Activated CD4-positive, alpha-beta T cell treated with anti-CD3 and anti-CD28 coated beads for 36 hours (primary cell): ENCODE measurements at regions of chr2 and their contacts with region 1.

Region 1: DNA sequence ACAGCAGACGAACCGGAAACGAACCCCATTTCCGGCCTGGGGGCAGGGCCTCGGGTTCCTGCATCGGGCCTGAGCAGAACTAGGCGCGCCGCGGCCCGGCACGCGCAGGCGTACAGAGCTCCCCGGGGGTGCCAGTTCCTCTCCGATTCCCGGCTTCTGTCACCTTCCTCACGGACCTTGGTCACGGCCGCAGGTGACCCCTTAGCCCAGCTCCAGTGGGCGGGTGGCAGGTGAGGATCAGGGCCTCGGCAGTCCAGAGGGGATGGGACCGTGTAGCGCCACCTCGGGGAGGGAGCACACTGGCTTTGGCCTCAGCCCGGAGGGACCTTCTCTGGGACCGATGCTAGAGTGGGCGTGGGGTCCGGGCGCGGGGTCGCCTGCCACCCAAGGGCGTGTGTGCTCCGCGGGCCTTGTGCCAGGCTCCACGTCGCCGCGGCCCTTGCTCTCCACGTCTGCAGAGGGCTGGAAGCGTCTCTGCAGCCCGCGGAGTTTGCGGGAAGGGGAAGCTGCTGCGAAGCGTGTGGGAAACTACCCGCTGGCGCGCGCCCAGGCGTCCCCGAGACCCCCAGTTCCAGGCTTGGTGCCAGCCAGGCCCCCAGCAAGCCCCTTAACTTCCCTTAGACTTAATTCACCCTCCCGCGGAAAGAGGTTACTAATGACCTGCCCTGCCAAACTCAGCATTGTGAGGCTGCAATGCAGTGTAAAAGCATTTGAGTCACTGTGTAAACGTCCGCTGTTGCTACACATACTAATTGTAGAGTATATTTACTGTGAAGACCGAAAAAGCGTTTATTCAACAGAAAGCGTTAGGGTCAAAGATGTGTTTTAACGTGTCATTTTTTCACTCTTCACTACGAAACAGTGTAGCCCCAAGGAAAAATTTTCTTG is at the start of gene TRAPPC12:
- DNase-seq: peak; percentile 95
- ATAC-seq: peak; percentile 70
- H3K4me3 Mint-ChIP-seq: peak within 1 kb of the TSS; percentile 98
- H3K27ac Mint-ChIP-seq: peak within 1 kb of the TSS; percentile 96
- H3K4me1 Mint-ChIP-seq: peaks cover 50% of the 10 kb centered on the region
- H3K27me3 Mint-ChIP-seq: no peaks in the 10 kb centered on the region
- total RNA-seq, gene TRAPPC12: 60.0 to 73.1 TPM

Region 2: GRCh38 chr2:2368476-2368875 is 1011.4 kb before region 1 on chr2:
- CTCF ChIA-PET with region 1: no interaction called
- POLR2A ChIA-PET with region 1: no interaction called
- intact Hi-C with region 1: no loop called
- DNase-seq: no peak
- ATAC-seq: no peak
- H3K4me3 Mint-ChIP-seq: no peak overlapping the region
- H3K27ac Mint-ChIP-seq: no peak overlapping the region
- H3K4me1 Mint-ChIP-seq: no peaks in the 10 kb centered on the region
- H3K27me3 Mint-ChIP-seq: peaks cover 3% of the 10 kb centered on the region

Region 3: DNA sequence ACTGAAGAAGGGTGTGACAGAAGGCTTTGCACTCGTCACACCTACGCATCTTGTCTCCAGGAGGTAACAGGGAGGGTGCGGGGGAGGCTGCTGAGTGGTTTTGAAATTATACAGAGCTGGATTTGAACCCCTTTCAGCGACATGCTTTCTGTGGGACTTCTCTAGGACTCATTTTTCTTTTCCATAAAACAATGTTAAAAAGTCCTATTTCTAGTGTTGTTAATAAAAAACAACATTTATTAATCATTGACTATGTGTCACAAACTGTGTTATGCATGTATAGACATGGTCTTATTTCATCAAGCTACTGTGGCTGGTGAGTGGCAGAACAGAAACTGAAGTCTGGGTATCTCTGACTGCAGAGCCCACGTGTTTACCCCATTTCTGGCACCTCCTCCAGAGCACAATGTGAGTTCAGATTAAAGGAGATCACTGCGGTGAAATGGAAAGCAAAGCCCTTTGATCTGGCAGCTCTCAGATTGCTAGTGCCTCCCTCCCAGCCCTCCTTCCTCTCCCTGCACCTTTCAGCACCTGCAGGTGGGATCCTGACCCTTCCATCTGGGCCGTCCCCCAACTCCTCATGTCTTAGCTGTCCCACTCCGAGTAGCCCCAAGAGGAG is 733.3 kb before region 1 on chr2:
- CTCF ChIA-PET with region 1: no interaction called
- POLR2A ChIA-PET with region 1: no interaction called
- intact Hi-C with region 1: loop called in 1 of 2 experiments (anchors 2 kb)
- DNase-seq: peak; percentile 78
- ATAC-seq: peak; percentile 95
- H3K4me3 Mint-ChIP-seq: peak overlapping the region; percentile 49
- H3K27ac Mint-ChIP-seq: peak overlapping the region; percentile 78
- H3K4me1 Mint-ChIP-seq: peaks cover 38% of the 10 kb centered on the region
- H3K27me3 Mint-ChIP-seq: no peaks in the 10 kb centered on the region

Region 4: DNA sequence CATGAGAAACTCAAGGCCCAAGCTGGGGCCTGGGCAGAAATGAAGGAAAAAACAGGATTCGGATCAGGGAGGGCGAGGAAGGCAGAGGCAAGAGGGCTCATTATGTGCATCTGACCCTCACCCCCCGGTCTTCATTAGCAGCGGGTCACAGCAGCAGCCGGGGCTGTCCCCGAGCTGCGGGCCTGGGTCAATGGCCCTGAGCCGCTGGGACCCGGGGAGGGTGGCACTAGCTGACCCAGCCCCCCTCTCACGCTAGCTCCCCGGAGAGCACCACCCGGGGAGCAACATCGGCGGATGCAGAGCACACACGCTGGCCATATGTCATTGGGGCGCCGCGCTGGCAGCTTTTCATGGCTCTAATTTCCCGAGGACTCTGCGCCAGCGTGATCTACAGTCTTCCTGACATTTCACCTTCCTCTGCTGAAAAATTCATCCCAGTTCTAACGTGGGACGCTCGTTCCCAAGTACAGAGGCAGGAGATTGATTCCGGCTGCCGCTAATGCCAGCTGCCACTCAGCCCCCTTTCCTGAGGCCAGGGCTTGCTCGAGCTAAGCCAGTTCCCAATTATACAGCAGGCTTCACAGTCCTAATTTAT is 66.0 kb before region 1 on chr2:
- CTCF ChIA-PET with region 1: no interaction called
- POLR2A ChIA-PET with region 1: no interaction called
- intact Hi-C with region 1: no loop called
- DNase-seq: no peak
- ATAC-seq: no peak
- H3K4me3 Mint-ChIP-seq: no peak overlapping the region
- H3K27ac Mint-ChIP-seq: no peak overlapping the region
- H3K4me1 Mint-ChIP-seq: peaks cover 9% of the 10 kb centered on the region
- H3K27me3 Mint-ChIP-seq: no peaks in the 10 kb centered on the region

Region 5: GRCh38 chr2:3423492-3424175 is 43.7 kb after region 1 on chr2:
- CTCF ChIA-PET with region 1: no interaction called
- POLR2A ChIA-PET with region 1: no interaction called
- intact Hi-C with region 1: no loop called
- DNase-seq: peak; percentile 86
- ATAC-seq: peak; percentile 80
- H3K4me3 Mint-ChIP-seq: no peak overlapping the region
- H3K27ac Mint-ChIP-seq: no peak overlapping the region
- H3K4me1 Mint-ChIP-seq: peaks cover 3% of the 10 kb centered on the region
- H3K27me3 Mint-ChIP-seq: no peaks in the 10 kb centered on the region

Region 6: GRCh38 chr2:3518496-3519254 is 138.8 kb after region 1 on chr2:
- CTCF ChIA-PET with region 1: no interaction called
- POLR2A ChIA-PET with region 1: no interaction called
- intact Hi-C with region 1: loop called (anchors 1 kb)
- DNase-seq: peak; percentile 99
- ATAC-seq: peak; percentile 83
- H3K4me3 Mint-ChIP-seq: peak overlapping the region; percentile 84
- H3K27ac Mint-ChIP-seq: peak overlapping the region; percentile 83
- H3K4me1 Mint-ChIP-seq: peaks cover 38% of the 10 kb centered on the region
- H3K27me3 Mint-ChIP-seq: no peaks in the 10 kb centered on the region

Region 7: DNA sequence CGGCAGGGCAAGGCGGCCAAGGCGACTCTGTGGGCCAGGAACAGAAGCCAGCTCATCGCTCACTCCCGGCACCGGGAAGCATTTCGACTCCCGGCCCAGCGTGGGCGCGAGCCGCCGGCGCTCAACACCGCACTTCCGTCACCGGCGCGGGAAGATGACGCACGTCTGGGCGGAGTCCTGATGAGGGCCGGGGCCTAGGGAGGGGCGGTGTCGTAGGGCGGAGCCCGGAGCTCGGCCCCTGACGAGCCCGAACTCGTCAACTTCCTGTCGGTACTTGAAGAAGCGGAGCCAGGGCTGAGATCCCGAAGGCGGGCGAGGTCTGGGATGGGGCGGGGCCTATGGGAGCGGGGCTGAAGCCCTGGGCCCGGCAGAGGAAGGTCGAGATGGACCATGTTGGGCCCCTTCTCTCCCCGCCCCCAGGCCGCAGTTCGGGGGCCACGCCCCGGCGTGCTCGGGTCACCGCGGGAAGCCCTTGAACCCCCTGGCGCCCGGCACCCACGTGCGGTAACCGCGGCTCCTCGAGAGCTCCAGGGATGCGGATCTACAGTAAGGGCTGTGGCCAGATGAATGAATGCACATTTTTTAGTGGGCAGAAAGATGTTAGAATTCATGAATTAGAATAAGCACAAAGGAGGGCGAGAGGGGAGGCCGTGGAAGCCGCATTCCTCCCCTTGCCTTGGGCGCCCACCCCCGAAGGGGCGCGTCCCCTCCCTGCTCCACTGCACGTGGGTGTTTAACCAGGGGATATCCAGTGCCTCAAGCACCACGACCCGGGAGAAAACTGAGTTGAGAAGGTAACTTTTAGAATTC is 178.5 kb after region 1 on chr2 and contains the start of gene RNASEH1:
- CTCF ChIA-PET with region 1: no interaction called
- POLR2A ChIA-PET with region 1: interaction called, 5 read pairs
- intact Hi-C with region 1: loop called (anchors 1 kb)
- DNase-seq: peak; percentile 99
- ATAC-seq: peak; percentile 99
- H3K4me3 Mint-ChIP-seq: peak within 1 kb of the TSS; percentile 91
- H3K27ac Mint-ChIP-seq: peak within 1 kb of the TSS; percentile 96
- H3K4me1 Mint-ChIP-seq: peaks cover 34% of the 10 kb centered on the region
- H3K27me3 Mint-ChIP-seq: no peaks in the 10 kb centered on the region
- total RNA-seq, gene RNASEH1: 14.6 to 24.0 TPM

Region 8: GRCh38 chr2:3575534-3576262 is 195.8 kb after region 1 on chr2:
- CTCF ChIA-PET with region 1: no interaction called
- POLR2A ChIA-PET with region 1: no interaction called
- intact Hi-C with region 1: loop called (anchors 1 kb)
- DNase-seq: peak; percentile 45
- ATAC-seq: peak; percentile 8
- H3K4me3 Mint-ChIP-seq: peak overlapping the region; percentile 94
- H3K27ac Mint-ChIP-seq: peak overlapping the region; percentile 92
- H3K4me1 Mint-ChIP-seq: peaks cover 47% of the 10 kb centered on the region
- H3K27me3 Mint-ChIP-seq: no peaks in the 10 kb centered on the region